Activated CD4-positive, alpha-beta memory T cell treated with anti-CD3 and anti-CD28 coated beads, Interleukin-2, amount 10 ng/mL, durations not matched to agents 7 days and 5 days (primary cell): ENCODE measurements at regions of chr10 and their contacts with region 1.

Region 1: DNA sequence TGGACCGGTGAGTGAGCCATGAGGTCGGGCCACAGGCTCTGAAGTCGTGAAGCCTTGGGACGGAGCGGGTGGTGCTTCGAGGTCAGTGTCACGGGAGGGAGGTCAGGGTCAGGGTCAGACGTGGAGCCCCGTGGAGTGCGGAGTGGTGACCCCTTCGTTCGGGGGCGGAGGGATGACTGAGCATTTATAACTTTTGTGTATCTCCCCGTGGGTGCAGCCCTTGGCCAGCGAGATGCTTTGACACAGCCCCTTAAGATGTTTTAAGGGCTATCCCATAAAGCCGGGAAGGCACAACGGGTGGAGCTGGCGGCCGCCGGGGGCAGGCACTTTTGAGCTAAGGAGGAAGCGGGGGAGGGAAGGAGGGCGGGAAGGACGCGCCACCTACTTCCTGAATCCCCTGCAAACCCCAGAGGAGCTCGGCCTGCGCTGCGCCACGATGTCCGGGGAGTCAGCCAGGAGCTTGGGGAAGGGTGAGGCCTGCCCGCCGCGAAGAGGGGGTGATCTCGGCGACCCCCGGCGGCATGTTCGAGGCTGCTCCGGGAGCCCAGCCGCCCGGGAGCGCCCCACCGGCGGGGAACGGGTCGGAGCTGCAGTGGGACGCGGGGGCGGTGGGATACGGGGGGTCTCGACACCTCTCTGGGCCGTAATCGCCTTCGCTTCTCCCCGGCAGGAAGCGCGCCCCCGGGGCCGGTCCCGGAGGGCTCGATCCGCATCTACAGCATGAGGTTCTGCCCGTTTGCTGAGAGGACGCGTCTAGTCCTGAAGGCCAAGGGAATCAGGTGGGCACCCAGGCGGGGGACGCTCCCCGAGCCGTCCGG is at the start of gene GSTO1:
- DNase-seq: peak; percentile 62
- H3K4me3 Mint-ChIP-seq: peak within 1 kb of the TSS; percentile 97
- H3K27ac Mint-ChIP-seq: peak within 1 kb of the TSS; percentile 92
- H3K4me1 Mint-ChIP-seq: peaks cover 50% of the 10 kb centered on the region
- H3K27me3 Mint-ChIP-seq: peaks cover 14% of the 10 kb centered on the region
- total RNA-seq, gene GSTO1: 139 to 142 TPM

Region 2: DNA sequence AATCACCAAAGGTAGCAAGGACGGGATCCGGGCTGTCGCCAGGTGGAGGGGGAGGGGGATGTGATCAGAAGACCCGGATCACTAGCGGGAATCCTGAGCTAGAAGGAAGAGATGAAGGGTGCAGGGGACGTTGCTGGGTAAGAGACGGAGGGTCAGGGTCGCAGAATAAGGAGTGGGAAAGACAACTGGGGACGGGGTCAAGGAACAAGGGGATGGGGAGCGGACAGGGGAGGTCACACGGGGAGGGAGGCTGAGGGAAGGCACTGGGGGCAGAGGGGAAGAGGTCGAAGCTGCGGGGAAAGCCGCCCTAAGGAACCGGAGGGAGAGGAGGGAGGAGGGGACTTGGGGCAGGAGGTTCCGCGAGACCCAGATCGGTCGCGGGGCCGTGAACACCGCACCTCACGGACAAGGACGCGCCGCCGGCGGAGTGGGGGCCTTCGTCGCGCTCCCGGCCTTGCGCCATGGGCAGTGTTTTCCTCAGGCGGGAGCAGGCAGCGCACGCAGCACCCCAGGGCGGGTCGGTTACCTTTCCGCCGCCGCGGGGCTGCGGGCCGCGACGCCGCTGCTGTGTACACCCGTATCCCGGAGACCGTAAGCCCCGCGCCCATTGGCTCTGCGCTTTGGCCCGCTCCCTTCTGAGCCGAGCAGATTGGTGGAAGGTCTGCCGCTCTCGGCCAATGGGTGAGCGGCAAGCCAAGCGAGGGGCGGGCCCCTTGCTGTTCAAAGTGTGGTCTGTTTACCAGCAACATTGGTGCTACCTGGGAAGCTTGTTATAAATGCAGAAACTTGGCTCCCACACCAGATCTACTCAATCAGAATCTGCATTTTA is 22.7 kb before region 1 on chr10 and contains the start of gene CFAP43:
- CTCF ChIA-PET with region 1: interaction called, 3 read pairs
- POLR2A ChIA-PET with region 1: interaction called, 16 read pairs
- DNase-seq: peak; percentile 99
- H3K4me3 Mint-ChIP-seq: peak within 1 kb of the TSS; percentile 86
- H3K27ac Mint-ChIP-seq: peak within 1 kb of the TSS; percentile 63
- H3K4me1 Mint-ChIP-seq: peaks cover 17% of the 10 kb centered on the region
- H3K27me3 Mint-ChIP-seq: peaks cover 39% of the 10 kb centered on the region
- total RNA-seq, gene CFAP43: 0.18 to 0.25 TPM

Region 3: GRCh38 chr10:104268716-104269645 is 14.3 kb after region 1 on chr10 and contains the start of gene GSTO2:
- CTCF ChIA-PET with region 1: interaction called, 61 read pairs
- POLR2A ChIA-PET with region 1: interaction called, 62 read pairs
- DNase-seq: peak; percentile 99
- H3K4me3 Mint-ChIP-seq: peak within 1 kb of the TSS; percentile 84
- H3K27ac Mint-ChIP-seq: peak within 1 kb of the TSS; percentile 93
- H3K4me1 Mint-ChIP-seq: peaks cover 42% of the 10 kb centered on the region
- H3K27me3 Mint-ChIP-seq: no peaks in the 10 kb centered on the region
- total RNA-seq, gene GSTO2: 0.88 to 1.8 TPM

Region 4: GRCh38 chr10:104281694-104282093 is 27.0 kb after region 1 on chr10:
- CTCF ChIA-PET with region 1: no interaction called
- POLR2A ChIA-PET with region 1: no interaction called
- DNase-seq: no peak
- H3K4me3 Mint-ChIP-seq: no peak overlapping the region
- H3K27ac Mint-ChIP-seq: no peak overlapping the region
- H3K4me1 Mint-ChIP-seq: no peaks in the 10 kb centered on the region
- H3K27me3 Mint-ChIP-seq: peaks cover 24% of the 10 kb centered on the region